Endothelial cell of umbilical vein (primary cell): ENCODE measurements at regions of chr13 and their contacts with region 1.

Region 1: DNA sequence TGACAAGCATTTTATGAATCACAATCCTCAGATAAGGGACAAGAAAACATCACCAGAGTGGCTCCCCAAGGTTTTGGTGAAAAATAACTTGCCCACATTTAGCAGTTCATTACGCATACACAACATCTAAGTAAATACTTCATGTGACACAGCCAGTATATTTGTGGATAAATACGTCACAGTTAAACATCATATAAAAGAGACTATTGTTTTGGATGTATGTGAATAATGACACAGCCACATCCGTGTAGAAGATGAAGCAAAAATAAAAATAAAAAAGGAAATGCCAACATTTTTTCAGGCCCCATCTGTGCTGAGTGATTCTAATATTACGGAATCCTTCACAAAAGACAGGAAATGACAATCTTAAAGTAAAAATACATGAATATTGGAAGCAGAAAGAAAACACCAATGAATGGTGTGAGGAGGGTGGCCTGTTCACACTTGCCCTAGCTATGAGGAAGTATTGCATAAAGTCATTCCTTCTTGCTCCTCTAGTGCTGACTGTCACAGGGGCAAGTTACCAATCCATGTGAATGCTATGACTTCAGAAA is 457.1 kb downstream of the KLF12 start:
- DNase-seq: peak; percentile 90
- H3K4me3 ChIP-seq: no peak overlapping the region
- H3K27ac ChIP-seq: peak overlapping the region; percentile 92
- H3K4me1 ChIP-seq: peaks cover 19% of the 10 kb centered on the region
- H3K27me3 ChIP-seq: no peaks in the 10 kb centered on the region
- CTCF ChIP-seq: no peak
- POLR2A ChIP-seq: no peak

Region 2: GRCh38 chr13:72781451-72782439 is 895.4 kb before region 1 on chr13 and contains the starts of genes DIS3 and PIBF1:
- CTCF ChIA-PET with region 1: no interaction called
- POLR2A ChIA-PET with region 1: no interaction called
- dilution Hi-C with region 1: no loop called
- intact Hi-C with region 1: loop called (anchors 10 kb)
- DNase-seq: peak; percentile 98
- H3K4me3 ChIP-seq: peak within 1 kb of the TSS; percentile 69 to 96 (median 77)
- H3K27ac ChIP-seq: peak within 1 kb of the TSS; percentile 71
- H3K4me1 ChIP-seq: peaks cover 25% of the 10 kb centered on the region
- H3K27me3 ChIP-seq: no peaks in the 10 kb centered on the region
- CTCF ChIP-seq: no peak
- POLR2A ChIP-seq: peak; percentile 77
- total RNA-seq, gene DIS3: 31.4 and 32.8 TPM in 2 replicates
- total RNA-seq, gene PIBF1: 18.2 and 18.4 TPM in 2 replicates

Region 3: GRCh38 chr13:73809561-73809960 is 132.4 kb after region 1 on chr13:
- CTCF ChIA-PET with region 1: no interaction called
- POLR2A ChIA-PET with region 1: no interaction called
- dilution Hi-C with region 1: no loop called
- intact Hi-C with region 1: no loop called
- DNase-seq: peak; percentile 64
- H3K4me3 ChIP-seq: no peak overlapping the region
- H3K27ac ChIP-seq: no peak overlapping the region
- H3K4me1 ChIP-seq: peaks cover 10% of the 10 kb centered on the region
- H3K27me3 ChIP-seq: no peaks in the 10 kb centered on the region
- CTCF ChIP-seq: no peak
- POLR2A ChIP-seq: no peak